ENCODE measurements at regions of chr12 and their contacts with region 1.

Region 1: DNA sequence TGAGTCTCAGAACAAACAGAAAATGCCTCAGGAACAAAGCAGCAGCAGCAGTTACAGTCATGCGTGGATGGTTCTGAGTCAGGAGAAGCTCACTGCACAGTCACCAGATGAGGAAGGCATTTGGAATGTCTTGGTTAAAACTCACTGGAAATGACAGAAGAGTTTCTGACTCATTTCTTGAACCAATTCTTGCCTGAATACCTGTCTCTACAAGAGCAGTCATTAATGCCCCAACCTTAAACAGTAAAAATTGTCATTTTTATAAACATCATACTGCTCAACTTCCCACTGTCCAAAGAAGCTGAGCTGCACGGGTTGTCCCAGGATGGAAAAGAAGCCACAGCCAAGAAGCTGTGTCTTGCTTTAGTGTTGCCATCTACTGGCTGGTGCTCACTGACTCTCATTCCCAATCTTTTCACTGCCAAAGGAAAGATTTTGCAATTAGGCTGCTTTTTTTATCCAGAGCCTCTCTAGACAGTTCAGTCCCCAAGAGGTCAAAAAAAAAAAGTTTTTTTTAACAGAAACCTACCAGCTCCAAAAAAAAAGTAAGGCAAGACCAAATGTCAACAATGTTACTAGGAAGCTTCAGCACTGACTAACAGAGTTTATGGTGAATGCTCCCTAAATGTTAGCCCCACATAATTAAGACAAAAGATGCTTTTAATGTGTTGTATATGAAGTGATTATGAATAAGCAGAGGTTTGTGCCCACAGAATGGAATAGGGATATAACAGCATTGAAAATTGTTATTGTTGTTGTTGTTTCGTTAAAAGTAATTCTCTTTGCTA is 40.4 kb downstream of the KICS2 start:
- DNase-seq: no peak
- ATAC-seq: peak; percentile 95

Region 2: GRCh38 chr12:63843721-63844390 is 337.8 kb before region 1 on chr12:
- intact Hi-C with region 1: loop called (anchors 5 kb)
- DNase-seq: peak; percentile 95
- ATAC-seq: peak; percentile 97

Region 3: GRCh38 chr12:64256166-64256800 is 74.6 kb after region 1 on chr12:
- intact Hi-C with region 1: loop called (anchors 5 kb)
- DNase-seq: no peak
- ATAC-seq: peak; percentile 53

Measured in Right ventricle myocardium superior (tissue), 1 donor.